GM12878 (cell line): ENCODE measurements at regions of chr7 and their contacts with region 1.

Region 1: GRCh38 chr7:87213811-87214210 is 5.7 kb downstream of the TMEM243 start:
- DNase-seq: no peak
- ATAC-seq: no peak
- H3K4me3 ChIP-seq: peak overlapping the region; percentile 73
- H3K27ac ChIP-seq: peak overlapping the region; percentile 98
- H3K4me1 ChIP-seq: peaks cover 33% of the 10 kb centered on the region
- H3K27me3 ChIP-seq: no peaks in the 10 kb centered on the region
- CTCF ChIP-seq: no peak
- EP300 ChIP-seq: no peak
- POLR2A ChIP-seq: no peak
- RAD21 ChIP-seq: no peak

Region 2: GRCh38 chr7:87116315-87116714 is 97.5 kb before region 1 on chr7:
- CTCF ChIA-PET with region 1: no interaction called
- POLR2A ChIA-PET with region 1: no interaction called
- RAD21 ChIA-PET with region 1: no interaction called
- SMC1A ChIA-PET with region 1: no interaction called
- in situ Hi-C with region 1: no loop called
- intact Hi-C with region 1: no loop called
- DNase-seq: no peak
- ATAC-seq: peak; percentile 64
- H3K4me3 ChIP-seq: no peak overlapping the region
- H3K27ac ChIP-seq: no peak overlapping the region
- H3K4me1 ChIP-seq: no peaks in the 10 kb centered on the region
- H3K27me3 ChIP-seq: no peaks in the 10 kb centered on the region
- CTCF ChIP-seq: no peak
- EP300 ChIP-seq: no peak
- POLR2A ChIP-seq: no peak
- RAD21 ChIP-seq: no peak

Region 3: GRCh38 chr7:87173471-87173870 is 40.3 kb before region 1 on chr7:
- CTCF ChIA-PET with region 1: interaction called, 3 read pairs
- POLR2A ChIA-PET with region 1: interaction called, 4 read pairs
- RAD21 ChIA-PET with region 1: interaction called, 10 read pairs
- SMC1A ChIA-PET with region 1: interaction called, 33 read pairs
- in situ Hi-C with region 1: no loop called
- intact Hi-C with region 1: no loop called
- DNase-seq: no peak
- ATAC-seq: no peak
- H3K4me3 ChIP-seq: no peak overlapping the region
- H3K27ac ChIP-seq: no peak overlapping the region
- H3K4me1 ChIP-seq: no peaks in the 10 kb centered on the region
- H3K27me3 ChIP-seq: no peaks in the 10 kb centered on the region
- CTCF ChIP-seq: no peak
- EP300 ChIP-seq: no peak
- POLR2A ChIP-seq: no peak
- RAD21 ChIP-seq: no peak

Region 4: GRCh38 chr7:87188930-87189329 is 24.9 kb before region 1 on chr7:
- CTCF ChIA-PET with region 1: interaction called, 7 read pairs
- POLR2A ChIA-PET with region 1: interaction called, 4 read pairs
- RAD21 ChIA-PET with region 1: interaction called, 11 read pairs
- SMC1A ChIA-PET with region 1: interaction called, 33 read pairs
- in situ Hi-C with region 1: no loop called
- intact Hi-C with region 1: no loop called
- DNase-seq: no peak
- ATAC-seq: peak; percentile 28
- H3K4me3 ChIP-seq: no peak overlapping the region
- H3K27ac ChIP-seq: no peak overlapping the region
- H3K4me1 ChIP-seq: no peaks in the 10 kb centered on the region
- H3K27me3 ChIP-seq: no peaks in the 10 kb centered on the region
- CTCF ChIP-seq: no peak
- EP300 ChIP-seq: no peak
- POLR2A ChIP-seq: no peak
- RAD21 ChIP-seq: no peak

Region 5: GRCh38 chr7:87199700-87200450 is 13.9 kb before region 1 on chr7:
- CTCF ChIA-PET with region 1: interaction called, 19 read pairs
- POLR2A ChIA-PET with region 1: interaction called, 20 read pairs
- RAD21 ChIA-PET with region 1: interaction called, 11 read pairs
- SMC1A ChIA-PET with region 1: interaction called, 66 read pairs
- in situ Hi-C with region 1: no loop called
- intact Hi-C with region 1: no loop called
- DNase-seq: no peak
- ATAC-seq: peak; percentile 21
- H3K4me3 ChIP-seq: no peak overlapping the region
- H3K27ac ChIP-seq: no peak overlapping the region; the same call in 1 of the 2 replicates
- H3K4me1 ChIP-seq: peaks cover 8% of the 10 kb centered on the region
- H3K27me3 ChIP-seq: no peaks in the 10 kb centered on the region
- CTCF ChIP-seq: no peak
- EP300 ChIP-seq: no peak
- POLR2A ChIP-seq: peak; percentile 52; the same call in 1 of the 2 replicates
- RAD21 ChIP-seq: no peak

Region 6: DNA sequence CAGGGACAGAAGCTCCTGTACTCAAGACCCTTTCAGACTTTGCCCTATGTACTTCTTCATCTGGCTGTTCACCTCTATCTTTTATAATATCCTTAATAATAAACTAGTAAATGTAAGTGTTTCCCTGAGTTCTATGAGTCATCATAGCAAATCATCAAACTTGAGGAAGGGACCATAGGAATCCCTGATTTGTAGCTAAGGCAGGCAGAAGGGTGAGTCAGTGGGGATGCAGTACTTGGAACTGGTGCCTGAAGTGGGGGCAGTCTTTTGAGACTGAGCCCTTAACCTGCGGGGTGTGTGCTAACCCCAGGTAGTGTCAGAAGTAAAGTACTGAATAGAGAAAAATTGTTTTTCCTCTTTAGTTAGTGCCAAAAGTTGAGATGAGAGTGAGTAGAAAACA is 11.9 kb after region 1 on chr7:
- CTCF ChIA-PET with region 1: interaction called, 4 read pairs
- POLR2A ChIA-PET with region 1: interaction called, 5 read pairs
- RAD21 ChIA-PET with region 1: interaction called, 7 read pairs
- SMC1A ChIA-PET with region 1: interaction called, 12 read pairs
- in situ Hi-C with region 1: no loop called
- intact Hi-C with region 1: no loop called
- DNase-seq: no peak
- ATAC-seq: no peak
- H3K4me3 ChIP-seq: no peak overlapping the region
- H3K27ac ChIP-seq: no peak overlapping the region
- H3K4me1 ChIP-seq: peaks cover 3% of the 10 kb centered on the region
- H3K27me3 ChIP-seq: no peaks in the 10 kb centered on the region
- CTCF ChIP-seq: no peak
- EP300 ChIP-seq: no peak
- POLR2A ChIP-seq: no peak
- RAD21 ChIP-seq: no peak